Vagina (tissue), 2 donors: ENCODE measurements at regions of chr11 and their contacts with region 1.

Region 1: GRCh38 chr11:19614370-19614940 is 98.2 kb upstream of the NAV2 start:
- DNase-seq: no peak
- H3K4me3 ChIP-seq: no peak overlapping the region
- H3K27ac ChIP-seq: no peak overlapping the region
- H3K4me1 ChIP-seq: peaks cover 12% of the 10 kb centered on the region
- H3K27me3 ChIP-seq: no peaks in the 10 kb centered on the region
- CTCF ChIP-seq: no peak
- POLR2A ChIP-seq: no peak

Region 2: DNA sequence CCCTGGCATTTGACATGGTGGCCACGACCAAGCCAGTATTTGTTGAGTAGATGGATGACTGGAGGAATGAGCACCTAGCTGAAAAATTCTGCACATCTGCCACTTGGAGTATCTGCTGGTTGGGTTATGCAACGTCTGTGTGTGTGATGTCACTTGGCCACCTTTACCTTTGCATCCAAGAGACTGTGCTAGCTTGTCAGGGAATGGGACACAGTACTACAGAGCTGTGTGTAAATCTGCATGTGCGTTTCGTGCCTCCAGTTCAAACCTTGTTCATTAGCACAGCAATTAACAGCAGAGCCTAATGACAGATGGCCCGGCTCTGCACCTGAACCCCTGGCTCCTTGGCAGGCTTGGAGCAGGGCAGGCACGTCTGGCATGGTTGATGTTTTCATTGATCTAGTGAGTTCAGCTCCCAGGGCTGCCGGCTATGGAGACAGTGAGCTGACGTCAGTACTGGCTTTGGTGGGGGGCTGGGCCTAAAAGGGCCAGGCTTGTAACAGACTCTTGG is 90.2 kb before region 1 on chr11:
- intact Hi-C with region 1: no loop called
- DNase-seq: no peak
- H3K4me3 ChIP-seq: no peak overlapping the region
- H3K27ac ChIP-seq: no peak overlapping the region
- H3K4me1 ChIP-seq: no peaks in the 10 kb centered on the region
- H3K27me3 ChIP-seq: no peaks in the 10 kb centered on the region
- CTCF ChIP-seq: no peak
- POLR2A ChIP-seq: no peak

Region 3: DNA sequence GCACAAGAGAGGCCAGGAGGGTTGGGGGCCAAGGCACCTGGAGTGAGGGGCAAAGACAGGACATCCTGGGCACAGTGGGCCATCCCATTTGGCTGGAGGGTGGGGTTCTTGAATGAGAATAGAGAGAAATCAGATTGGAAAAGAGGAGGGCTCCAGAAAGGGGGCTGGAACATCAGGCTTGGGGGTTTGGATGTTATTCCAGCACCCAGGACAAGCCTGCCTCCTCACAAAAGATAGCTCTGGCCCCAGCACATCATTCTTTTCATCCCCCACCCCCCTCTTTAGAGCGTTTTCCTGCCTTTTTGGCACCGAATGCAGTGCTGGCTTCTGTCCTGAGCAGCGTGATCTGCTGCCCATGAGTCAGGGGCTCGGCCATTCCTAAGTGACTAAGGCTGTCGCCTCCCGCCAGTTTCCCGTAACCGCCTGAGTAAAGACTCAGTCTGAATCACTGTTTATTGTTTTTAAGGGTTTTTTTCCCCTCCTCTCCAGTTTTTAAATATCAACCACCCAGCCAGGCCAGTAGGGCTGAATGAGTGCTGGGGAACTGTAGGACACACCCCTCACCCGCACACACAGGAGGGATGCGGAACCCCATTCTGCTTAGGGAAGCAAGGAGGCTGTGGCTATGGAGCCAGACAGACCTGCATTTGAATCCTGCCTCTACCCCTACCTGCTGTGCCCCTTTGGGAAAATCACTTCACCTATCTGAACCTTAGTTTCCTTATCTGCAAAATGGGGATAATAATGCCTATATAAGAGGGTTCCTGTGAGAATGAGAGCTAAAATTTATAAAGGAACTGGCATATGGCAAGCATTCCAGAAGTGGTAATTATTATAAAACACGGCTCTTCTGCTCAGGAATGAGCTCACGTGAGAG is 65.7 kb after region 1 on chr11:
- intact Hi-C with region 1: no loop called
- DNase-seq: peak in 1 of 2 donors; percentile 96
- H3K4me3 ChIP-seq: no peak overlapping the region
- H3K27ac ChIP-seq: peak overlapping the region; percentile 86
- H3K4me1 ChIP-seq: peaks cover 53% of the 10 kb centered on the region
- H3K27me3 ChIP-seq: no peaks in the 10 kb centered on the region
- CTCF ChIP-seq: peak in 1 of 3 experiments; percentile 22
- POLR2A ChIP-seq: no peak

Region 4: DNA sequence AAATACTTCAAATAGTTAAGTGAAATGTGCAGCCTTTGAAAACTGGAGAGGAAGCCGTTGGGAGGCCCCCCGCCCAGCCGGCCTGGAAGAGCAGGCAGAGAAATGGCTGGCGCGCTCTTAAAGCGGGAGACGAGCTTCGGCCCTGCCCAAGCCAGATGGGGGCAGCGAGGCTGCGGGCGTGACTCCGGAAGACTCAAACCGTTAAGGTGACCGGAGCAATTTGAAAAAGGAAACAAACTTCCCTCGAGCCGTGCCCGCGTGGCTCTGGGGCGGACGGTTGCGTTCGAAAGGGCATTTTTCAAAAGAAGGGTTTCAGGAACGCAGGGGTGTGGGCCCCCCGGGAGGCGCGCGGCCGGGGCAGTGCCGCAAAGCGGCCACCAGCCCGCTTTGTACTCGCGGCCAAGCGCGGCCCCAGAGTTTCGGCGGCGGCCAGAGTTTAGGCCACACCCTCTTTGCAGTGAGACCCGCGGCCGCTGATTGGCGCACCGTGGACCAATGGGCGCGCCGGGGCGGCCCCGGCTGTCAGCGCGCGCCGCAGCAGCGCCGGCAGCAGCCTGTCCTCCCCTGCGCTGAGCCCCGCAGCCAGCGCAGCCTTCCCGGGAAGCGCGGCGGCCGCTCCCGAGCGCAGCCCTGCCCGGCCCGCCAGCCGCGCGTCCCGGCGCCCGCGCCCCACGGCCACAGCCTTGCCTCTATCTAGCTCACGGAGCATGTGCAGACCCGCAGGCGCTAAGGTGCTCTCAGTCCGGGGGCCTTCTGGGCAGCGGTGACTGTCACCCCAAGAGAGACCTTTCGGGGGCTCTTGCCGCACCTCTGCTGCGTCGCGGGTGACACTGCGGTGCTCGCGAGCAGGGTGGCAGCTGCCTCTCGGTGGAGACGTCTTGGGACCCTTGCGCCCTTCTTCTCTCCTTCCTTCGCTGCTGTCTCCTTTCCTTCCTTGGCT is 98.1 kb after region 1 on chr11 and contains the start of gene NAV2:
- intact Hi-C with region 1: loop called (anchors 10 kb)
- DNase-seq: peak in 1 of 2 donors; percentile 92
- H3K4me3 ChIP-seq: peak within 1 kb of the TSS; percentile 68 to 92
- H3K27ac ChIP-seq: peak within 1 kb of the TSS; percentile 89
- H3K4me1 ChIP-seq: peaks cover 43% of the 10 kb centered on the region
- H3K27me3 ChIP-seq: no peaks in the 10 kb centered on the region
- CTCF ChIP-seq: peak in 1 of 3 experiments; percentile 36
- POLR2A ChIP-seq: peak; percentile 24 to 85
- total RNA-seq, gene NAV2: 25.3 TPM